SK-N-SH (cell line): ENCODE measurements at regions of chr7 and their contacts with region 1.

Region 1: GRCh38 chr7:108146070-108146837 is 16.1 kb upstream of the LAMB4 start:
- DNase-seq: peak; percentile 69
- H3K4me3 ChIP-seq: no peak overlapping the region
- H3K27ac ChIP-seq: peak overlapping the region in 1 of 2 experiments; percentile 40; a peak in 1 of 4 replicates
- H3K4me1 ChIP-seq: peaks cover 0 to 6% of the 10 kb centered on the region in 2 experiments; a peak in 1 of 4 replicates
- H3K27me3 ChIP-seq: no peaks in the 10 kb centered on the region
- CTCF ChIP-seq: peak; percentile 100
- EP300 ChIP-seq: peak in 1 of 2 experiments; percentile 50; a peak in 1 of 4 replicates
- RAD21 ChIP-seq: peak; percentile 100

Region 2: DNA sequence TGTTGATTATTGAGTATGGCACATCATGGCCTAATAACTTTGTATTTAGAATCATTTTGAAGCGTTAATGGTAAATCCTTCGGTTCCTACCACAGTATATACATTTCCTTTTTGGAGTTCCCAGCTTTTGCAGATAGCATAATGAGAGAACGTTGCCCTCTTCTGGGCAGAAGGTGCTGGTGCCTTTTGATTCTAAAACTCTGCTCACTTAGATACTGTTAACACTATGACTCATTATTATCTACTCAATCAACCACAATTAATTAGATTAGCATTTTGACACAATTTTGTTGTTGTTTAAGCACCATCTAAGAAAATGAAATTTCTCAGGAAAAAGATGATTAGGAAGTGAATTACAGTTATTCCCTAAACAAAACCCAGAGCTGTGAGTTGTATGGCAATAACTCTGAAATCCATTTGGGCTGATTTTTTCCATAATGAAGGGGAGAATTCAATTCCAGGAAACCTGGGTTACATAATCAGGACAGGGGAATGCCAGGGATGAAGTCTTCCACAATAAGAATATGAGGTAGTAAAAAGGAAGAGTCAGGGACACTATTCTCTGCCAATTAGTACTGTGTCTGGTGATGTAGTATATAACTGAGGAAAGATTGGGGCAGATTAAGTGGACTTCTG is 266.7 kb before region 1 on chr7:
- CTCF ChIA-PET with region 1: interaction called, 81 read pairs
- POLR2A ChIA-PET with region 1: no interaction called
- DNase-seq: peak; percentile 75
- H3K4me3 ChIP-seq: no peak overlapping the region; a peak in 1 of 4 replicates
- H3K27ac ChIP-seq: no peak overlapping the region
- H3K4me1 ChIP-seq: peaks cover 0 to 2% of the 10 kb centered on the region in 2 experiments; a peak in 1 of 4 replicates
- H3K27me3 ChIP-seq: no peaks in the 10 kb centered on the region
- CTCF ChIP-seq: peak; percentile 98
- EP300 ChIP-seq: no peak
- RAD21 ChIP-seq: peak; percentile 90

Region 3: GRCh38 chr7:107966711-107967110 is 179.5 kb before region 1 on chr7:
- CTCF ChIA-PET with region 1: interaction called, 13 read pairs
- POLR2A ChIA-PET with region 1: no interaction called
- DNase-seq: no peak
- H3K4me3 ChIP-seq: no peak overlapping the region
- H3K27ac ChIP-seq: peak overlapping the region; percentile 19 to 40; a peak in 3 of 4 replicates
- H3K4me1 ChIP-seq: peaks cover 4% of the 10 kb centered on the region in 2 experiments; a peak in 2 of 4 replicates
- H3K27me3 ChIP-seq: no peaks in the 10 kb centered on the region
- CTCF ChIP-seq: 0 out of 2 replicates have a peak, but pooled peaks have one; percentile 11
- EP300 ChIP-seq: 0 out of 4 replicates have a peak, but pooled peaks of 1 of the 2 experiments have one; percentile 41
- RAD21 ChIP-seq: no peak

Region 4: GRCh38 chr7:108002726-108003598 is 143.3 kb before region 1 on chr7 and contains the start of gene LAMB1:
- CTCF ChIA-PET with region 1: interaction called, 19 read pairs
- POLR2A ChIA-PET with region 1: interaction called, 9 read pairs
- DNase-seq: peak; percentile 98
- H3K4me3 ChIP-seq: peak within 1 kb of the TSS; percentile 92 to 95
- H3K27ac ChIP-seq: peak within 1 kb of the TSS; percentile 93 to 100
- H3K4me1 ChIP-seq: peaks cover 43 to 56% of the 10 kb centered on the region in 2 experiments
- H3K27me3 ChIP-seq: no peaks in the 10 kb centered on the region
- CTCF ChIP-seq: no peak
- EP300 ChIP-seq: peak; percentile 27 to 35; a peak in 1 of 4 replicates
- RAD21 ChIP-seq: 0 out of 2 replicates have a peak, but pooled peaks have one; percentile 31
- polyA plus RNA-seq, gene LAMB1: 435 and 471 TPM in 2 replicates

Region 5: DNA sequence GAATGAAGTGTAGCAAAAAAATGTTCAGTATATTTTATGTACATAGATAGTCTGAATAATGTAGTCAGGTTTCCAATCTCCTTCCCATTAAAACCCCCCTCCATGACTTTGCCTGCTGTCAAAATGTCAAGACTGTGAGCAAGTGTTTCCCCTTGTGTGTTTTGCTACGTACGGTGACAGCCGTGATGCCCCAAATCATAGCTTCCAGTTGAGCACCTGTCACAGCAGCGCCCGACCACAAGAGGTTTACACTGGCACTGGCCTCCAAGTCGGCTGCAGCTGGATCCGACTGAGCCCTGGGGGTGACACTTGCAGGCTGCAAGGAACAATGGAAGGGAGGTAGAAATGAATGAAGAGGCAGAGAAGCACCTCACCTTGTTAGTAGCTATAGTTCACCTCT is 78.4 kb before region 1 on chr7:
- CTCF ChIA-PET with region 1: no interaction called
- POLR2A ChIA-PET with region 1: no interaction called
- DNase-seq: no peak
- H3K4me3 ChIP-seq: no peak overlapping the region
- H3K27ac ChIP-seq: no peak overlapping the region
- H3K4me1 ChIP-seq: peaks cover 0 to 4% of the 10 kb centered on the region in 2 experiments; a peak in 1 of 4 replicates
- H3K27me3 ChIP-seq: no peaks in the 10 kb centered on the region
- CTCF ChIP-seq: no peak
- EP300 ChIP-seq: no peak
- RAD21 ChIP-seq: no peak

Region 6: DNA sequence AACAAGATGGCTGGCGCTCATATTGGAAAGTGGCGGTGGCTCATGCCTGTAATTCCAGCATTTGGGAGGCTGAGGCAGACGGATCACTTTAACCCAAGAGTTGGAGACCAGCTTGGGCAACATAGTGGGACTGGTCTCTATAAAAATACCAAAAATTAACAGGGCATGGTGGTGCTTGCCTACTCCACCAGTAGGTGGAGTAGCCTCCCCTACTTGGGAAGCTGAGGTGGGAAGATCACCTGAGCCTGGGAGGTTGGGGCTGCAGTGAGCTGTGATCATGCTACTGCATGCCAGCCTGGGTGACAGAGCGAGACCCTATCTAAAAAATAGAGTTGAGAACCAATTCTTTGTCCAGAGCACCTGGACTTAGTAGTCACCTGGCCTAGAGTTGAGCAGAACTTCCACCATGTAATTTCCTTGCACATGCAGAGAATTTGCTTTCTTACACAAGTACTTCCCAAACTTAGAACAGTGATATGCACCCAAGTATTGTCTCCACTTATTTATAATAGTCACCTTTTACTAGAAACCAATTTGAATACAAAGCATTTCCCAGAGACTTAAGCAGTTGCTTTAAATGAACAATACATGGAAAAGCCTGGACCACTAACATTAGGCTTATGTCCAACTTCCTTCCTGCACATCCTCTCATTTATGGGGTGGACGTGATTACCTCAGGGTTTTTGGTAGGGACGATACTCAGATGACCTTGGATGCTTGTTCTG is 32.0 kb before region 1 on chr7:
- CTCF ChIA-PET with region 1: interaction called, 37 read pairs
- POLR2A ChIA-PET with region 1: no interaction called
- DNase-seq: no peak
- H3K4me3 ChIP-seq: no peak overlapping the region; a peak in 1 of 4 replicates
- H3K27ac ChIP-seq: no peak overlapping the region
- H3K4me1 ChIP-seq: peaks cover 0 to under 1% of the 10 kb centered on the region in 2 experiments; a peak in 1 of 4 replicates
- H3K27me3 ChIP-seq: no peaks in the 10 kb centered on the region
- CTCF ChIP-seq: peak; percentile 57
- EP300 ChIP-seq: no peak
- RAD21 ChIP-seq: peak; percentile 56

Region 7: GRCh38 chr7:108164946-108165345 is 18.7 kb after region 1 on chr7:
- CTCF ChIA-PET with region 1: interaction called, 10 read pairs
- POLR2A ChIA-PET with region 1: no interaction called
- DNase-seq: no peak
- H3K4me3 ChIP-seq: no peak overlapping the region
- H3K27ac ChIP-seq: no peak overlapping the region
- H3K4me1 ChIP-seq: no peaks in the 10 kb centered on the region; a peak in 1 of 4 replicates
- H3K27me3 ChIP-seq: no peaks in the 10 kb centered on the region; the same call in 1 of the 2 replicates
- CTCF ChIP-seq: no peak; the same call in 1 of the 2 replicates
- EP300 ChIP-seq: no peak
- RAD21 ChIP-seq: no peak

Region 8: GRCh38 chr7:108434010-108434409 is 287.8 kb after region 1 on chr7:
- CTCF ChIA-PET with region 1: no interaction called
- POLR2A ChIA-PET with region 1: no interaction called
- DNase-seq: no peak
- H3K4me3 ChIP-seq: no peak overlapping the region
- H3K27ac ChIP-seq: no peak overlapping the region
- H3K4me1 ChIP-seq: no peaks in the 10 kb centered on the region; a peak in 1 of 4 replicates
- H3K27me3 ChIP-seq: no peaks in the 10 kb centered on the region; the same call in 1 of the 2 replicates
- CTCF ChIP-seq: no peak
- EP300 ChIP-seq: no peak
- RAD21 ChIP-seq: no peak